Naive thymus-derived CD4-positive, alpha-beta T cell (primary cell): ENCODE measurements at regions of chr19 and their contacts with region 1.

Region 1: GRCh38 chr19:9865732-9866501 is 30.8 kb downstream of the PIN1 start:
- DNase-seq: peak in 6 of 9 donors; percentile 67 to 80 (median 72)
- ATAC-seq: peak; percentile 88
- H3K4me3 ChIP-seq: peak overlapping the region; percentile 25
- H3K4me3 Mint-ChIP-seq: peak overlapping the region; percentile 43 to 86 (median 80)
- H3K27ac ChIP-seq: peak overlapping the region; percentile 6
- H3K27ac Mint-ChIP-seq: peak overlapping the region; percentile 72 to 97 (median 86)
- H3K4me1 ChIP-seq: peaks cover 39 to 63% of the 10 kb centered on the region in 2 donors
- H3K4me1 Mint-ChIP-seq: peaks cover 35 to 64% (median 57%) of the 10 kb centered on the region in 7 donors
- H3K27me3 ChIP-seq: no peaks in the 10 kb centered on the region
- H3K27me3 Mint-ChIP-seq: no peaks in the 10 kb centered on the region

Region 2: GRCh38 chr19:9827289-9828238 is 38.4 kb before region 1 on chr19 and contains the start of gene UBL5:
- CTCF ChIA-PET with region 1: interaction called, 4 read pairs
- POLR2A ChIA-PET with region 1: interaction called, 12 read pairs
- intact Hi-C with region 1: no loop called
- DNase-seq: peak; percentile 72 to 91 (median 89)
- ATAC-seq: peak; percentile 98
- H3K4me3 ChIP-seq: peak within 1 kb of the TSS; percentile 97
- H3K4me3 Mint-ChIP-seq: peak within 1 kb of the TSS; percentile 90 to 100 (median 99)
- H3K27ac ChIP-seq: peak within 1 kb of the TSS; percentile 87
- H3K27ac Mint-ChIP-seq: peak within 1 kb of the TSS; percentile 83 to 99 (median 98)
- H3K4me1 ChIP-seq: peaks cover 14 to 16% of the 10 kb centered on the region in 2 donors
- H3K4me1 Mint-ChIP-seq: peaks cover 15 to 45% (median 27%) of the 10 kb centered on the region in 7 donors
- H3K27me3 ChIP-seq: no peaks in the 10 kb centered on the region
- H3K27me3 Mint-ChIP-seq: no peaks in the 10 kb centered on the region
- total RNA-seq, gene UBL5: 182 to 375 (median 198) TPM

Region 3: GRCh38 chr19:9914315-9915207 is 48.6 kb after region 1 on chr19:
- CTCF ChIA-PET with region 1: interaction called, 3 read pairs
- POLR2A ChIA-PET with region 1: interaction called, 3 read pairs
- intact Hi-C with region 1: loop called (anchors 1 to 5 kb)
- DNase-seq: peak; percentile 59 to 83 (median 72)
- ATAC-seq: peak; percentile 95
- H3K4me3 ChIP-seq: peak overlapping the region; percentile 64
- H3K4me3 Mint-ChIP-seq: peak overlapping the region; percentile 66 to 86 (median 72)
- H3K27ac ChIP-seq: no peak overlapping the region
- H3K27ac Mint-ChIP-seq: no peak overlapping the region
- H3K4me1 ChIP-seq: peaks cover 3 to 5% of the 10 kb centered on the region in 2 donors
- H3K4me1 Mint-ChIP-seq: peaks cover 6 to 12% (median 9%) of the 10 kb centered on the region in 7 donors
- H3K27me3 ChIP-seq: peaks cover 0 to 13% of the 10 kb centered on the region in 2 donors
- H3K27me3 Mint-ChIP-seq: peaks cover 22 to 33% (median 27%) of the 10 kb centered on the region in 5 donors

Region 4: GRCh38 chr19:9966448-9967143 is 100.7 kb after region 1 on chr19:
- CTCF ChIA-PET with region 1: no interaction called
- POLR2A ChIA-PET with region 1: no interaction called
- intact Hi-C with region 1: no loop called
- DNase-seq: no peak
- ATAC-seq: no peak
- H3K4me3 ChIP-seq: no peak overlapping the region
- H3K4me3 Mint-ChIP-seq: peak overlapping the region in 2 of 10 donors; percentile 4 to 58
- H3K27ac ChIP-seq: no peak overlapping the region
- H3K27ac Mint-ChIP-seq: no peak overlapping the region
- H3K4me1 ChIP-seq: no peaks in the 10 kb centered on the region
- H3K4me1 Mint-ChIP-seq: peaks cover 0 to 8% (median 4%) of the 10 kb centered on the region in 7 donors
- H3K27me3 ChIP-seq: no peaks in the 10 kb centered on the region
- H3K27me3 Mint-ChIP-seq: peaks cover 24 to 47% (median 46%) of the 10 kb centered on the region in 5 donors

Region 5: GRCh38 chr19:10230861-10231611 is 365.1 kb after region 1 on chr19 and contains the start of gene S1PR2:
- CTCF ChIA-PET with region 1: no interaction called
- POLR2A ChIA-PET with region 1: no interaction called
- intact Hi-C with region 1: no loop called
- DNase-seq: peak; percentile 47 to 79 (median 56)
- ATAC-seq: peak; percentile 60
- H3K4me3 ChIP-seq: peak within 1 kb of the TSS; percentile 81
- H3K4me3 Mint-ChIP-seq: peak within 1 kb of the TSS; percentile 79 to 94 (median 88)
- H3K27ac ChIP-seq: peak within 1 kb of the TSS; percentile 94
- H3K27ac Mint-ChIP-seq: peak within 1 kb of the TSS; percentile 80 to 89 (median 83)
- H3K4me1 ChIP-seq: peaks cover 16 to 17% of the 10 kb centered on the region in 2 donors
- H3K4me1 Mint-ChIP-seq: peaks cover 7 to 37% (median 24%) of the 10 kb centered on the region in 7 donors
- H3K27me3 ChIP-seq: no peaks in the 10 kb centered on the region
- H3K27me3 Mint-ChIP-seq: no peaks in the 10 kb centered on the region
- total RNA-seq, gene S1PR2: 3.4 to 6.8 (median 5.2) TPM